Activated T-helper 1 cell treated with anti-CD3 and anti-CD28 coated beads, Interleukin-12 subunit alpha, Interleukin-12 subunit beta, Interleukin-2, Interleukin-4 antibody, amounts not matched to agents 30 ng/mL and 10 ng/mL and 1 ng/mL, durations not matched to agents 14 hours and 24 hours and 36 hours (primary cell): ENCODE measurements at regions of chr9 and their contacts with region 1.

Region 1: GRCh38 chr9:105608721-105609598 is 51.0 kb downstream of the FKTN start:
- DNase-seq: no peak
- H3K4me3 Mint-ChIP-seq: no peak overlapping the region
- H3K27ac Mint-ChIP-seq: no peak overlapping the region
- H3K4me1 Mint-ChIP-seq: no peaks in the 10 kb centered on the region
- H3K27me3 Mint-ChIP-seq: no peaks in the 10 kb centered on the region

Region 2: GRCh38 chr9:105357937-105358336 is 251.0 kb before region 1 on chr9:
- intact Hi-C with region 1: no loop called
- DNase-seq: no peak
- H3K4me3 Mint-ChIP-seq: no peak overlapping the region
- H3K27ac Mint-ChIP-seq: no peak overlapping the region
- H3K4me1 Mint-ChIP-seq: peaks cover 18% of the 10 kb centered on the region
- H3K27me3 Mint-ChIP-seq: no peaks in the 10 kb centered on the region

Region 3: GRCh38 chr9:105713260-105714019 is 104.5 kb after region 1 on chr9:
- intact Hi-C with region 1: loop called (anchors 1 kb)
- DNase-seq: no peak
- H3K4me3 Mint-ChIP-seq: no peak overlapping the region
- H3K27ac Mint-ChIP-seq: no peak overlapping the region
- H3K4me1 Mint-ChIP-seq: peaks cover 5% of the 10 kb centered on the region
- H3K27me3 Mint-ChIP-seq: no peaks in the 10 kb centered on the region